Activated T-helper 2 cell treated with anti-CD3 and anti-CD28 coated beads, Interferon-gamma antibody, Interleukin-2, Interleukin-4, amounts not matched to agents 10 μg/mL and 5 μg/mL and 100 μg/mL, durations not matched to agents 14 hours and 24 hours and 36 hours (primary cell): ENCODE measurements at regions of chr5 and their contacts with region 1.

Region 1: DNA sequence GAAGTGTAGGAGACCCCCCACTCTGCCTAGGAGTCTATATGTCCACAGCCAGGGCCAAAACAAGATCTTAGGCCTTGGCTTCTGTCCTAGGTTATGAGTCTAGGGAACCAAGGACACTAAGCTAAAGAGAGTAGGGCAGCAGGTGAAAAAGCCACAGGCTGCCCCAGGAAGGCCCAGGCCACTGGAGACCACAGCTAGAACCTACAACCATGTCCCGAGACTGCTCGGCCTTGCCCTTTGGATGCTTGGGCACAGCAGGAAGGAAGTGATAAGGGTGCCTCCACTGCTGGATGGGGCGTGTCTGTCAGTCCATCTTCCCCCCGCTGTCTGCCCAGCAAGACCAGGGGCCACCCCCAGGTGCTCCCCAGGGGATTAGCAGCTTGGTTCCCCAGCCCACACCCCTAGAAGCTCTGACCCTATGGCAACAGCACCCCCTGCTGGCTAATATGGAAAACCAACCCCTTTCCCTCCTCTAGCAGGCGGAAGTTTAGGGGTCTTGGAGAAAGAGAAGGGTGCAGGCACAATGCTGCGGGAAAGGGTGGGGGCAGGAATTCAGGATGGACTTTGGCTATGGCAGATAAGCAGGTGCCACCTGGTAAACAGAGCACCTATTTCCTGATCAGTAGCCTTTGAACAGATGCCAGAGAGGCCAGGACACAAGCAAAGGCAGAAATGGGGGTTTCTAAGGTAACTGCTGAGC is 10.5 kb upstream of the IRF1 start:
- DNase-seq: peak; percentile 69
- H3K4me3 Mint-ChIP-seq: no peak overlapping the region
- H3K27ac Mint-ChIP-seq: peak overlapping the region; percentile 58
- H3K4me1 Mint-ChIP-seq: peaks cover 22% of the 10 kb centered on the region
- H3K27me3 Mint-ChIP-seq: peaks cover under 1% of the 10 kb centered on the region

Region 2: DNA sequence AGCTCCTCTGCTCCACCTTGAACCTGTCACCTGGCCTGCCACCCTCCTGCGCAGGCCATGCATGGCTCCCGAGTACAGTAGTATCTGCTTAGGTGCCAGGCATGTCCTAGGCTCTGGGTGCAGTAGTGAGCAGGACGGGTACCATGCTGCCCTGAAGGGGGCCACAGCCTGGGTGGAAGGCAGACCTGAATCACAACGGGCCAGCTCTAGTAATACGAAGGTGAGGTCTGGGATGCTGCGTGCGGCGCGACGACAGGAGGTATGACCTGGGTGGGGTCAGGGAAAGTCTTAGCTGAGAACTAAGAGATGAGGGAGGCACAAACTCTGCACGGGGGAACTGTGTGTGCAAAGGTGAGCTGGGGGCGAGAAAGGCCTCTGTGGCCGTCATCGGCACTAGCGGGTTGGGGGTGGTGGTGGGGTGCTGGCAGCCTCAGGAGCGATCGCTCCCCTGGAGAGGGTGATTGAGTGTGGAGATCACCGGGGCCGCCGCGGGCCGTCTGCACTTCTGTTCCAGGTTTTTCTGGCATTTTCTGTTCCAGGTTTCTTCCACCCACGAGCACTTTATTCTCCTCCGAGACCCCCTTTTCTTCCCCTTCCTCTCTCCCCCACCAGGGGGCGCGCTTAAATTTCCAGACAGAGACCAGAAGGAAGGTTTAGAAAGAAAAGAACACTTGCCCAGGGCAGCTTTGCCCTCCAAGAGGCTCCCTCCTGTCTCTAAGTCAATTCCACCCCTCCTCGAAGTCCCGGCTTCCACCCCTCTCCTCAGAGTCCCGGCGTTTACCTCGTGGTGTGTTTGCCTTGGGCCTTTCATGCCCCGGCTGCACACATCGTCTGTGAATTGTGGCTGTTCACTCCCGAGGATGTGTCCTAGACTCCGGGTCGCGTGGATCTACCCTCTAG is 228.5 kb before region 1 on chr5:
- intact Hi-C with region 1: loop called (anchors 1 kb)
- DNase-seq: peak; percentile 52
- H3K4me3 Mint-ChIP-seq: no peak overlapping the region
- H3K27ac Mint-ChIP-seq: peak overlapping the region; percentile 6
- H3K4me1 Mint-ChIP-seq: peaks cover 3% of the 10 kb centered on the region
- H3K27me3 Mint-ChIP-seq: peaks cover 5% of the 10 kb centered on the region

Region 3: DNA sequence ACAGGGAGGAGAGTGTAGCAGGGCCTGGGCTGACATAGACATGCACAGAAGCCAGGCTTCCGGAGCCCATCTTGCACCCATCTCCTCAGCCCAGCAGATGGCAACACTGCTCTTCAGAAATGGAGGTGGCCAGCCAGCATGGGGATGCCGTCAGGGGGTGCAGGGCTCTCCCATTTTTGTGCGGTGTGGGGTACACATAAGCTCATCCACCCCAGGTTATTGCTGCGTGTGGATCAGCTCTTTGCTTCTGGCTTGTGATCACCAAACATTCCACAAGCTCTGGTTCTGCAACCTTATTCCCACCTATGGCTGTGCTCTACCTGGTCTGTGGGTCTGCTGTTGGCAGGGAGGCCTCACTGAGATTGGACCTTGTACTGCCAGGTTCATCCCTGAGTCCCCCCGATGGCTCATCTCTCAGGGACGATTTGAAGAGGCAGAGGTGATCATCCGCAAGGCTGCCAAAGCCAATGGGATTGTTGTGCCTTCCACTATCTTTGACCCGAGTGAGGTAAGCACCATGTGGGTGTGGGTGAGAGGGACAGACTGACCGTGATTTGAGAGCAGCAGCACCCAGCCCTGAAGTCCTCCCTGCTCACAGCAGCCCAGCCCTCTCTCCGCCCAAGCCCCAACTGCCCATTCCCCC is 114.3 kb before region 1 on chr5:
- intact Hi-C with region 1: loop called (anchors 1 kb)
- DNase-seq: peak; percentile 73
- H3K4me3 Mint-ChIP-seq: no peak overlapping the region
- H3K27ac Mint-ChIP-seq: peak overlapping the region; percentile 24
- H3K4me1 Mint-ChIP-seq: peaks cover 42% of the 10 kb centered on the region
- H3K27me3 Mint-ChIP-seq: no peaks in the 10 kb centered on the region

Region 4: GRCh38 chr5:132419502-132420468 is 81.3 kb before region 1 on chr5:
- intact Hi-C with region 1: loop called (anchors 1 kb)
- DNase-seq: peak; percentile 64
- H3K4me3 Mint-ChIP-seq: peak overlapping the region; percentile 72
- H3K27ac Mint-ChIP-seq: peak overlapping the region; percentile 89
- H3K4me1 Mint-ChIP-seq: peaks cover 85% of the 10 kb centered on the region
- H3K27me3 Mint-ChIP-seq: no peaks in the 10 kb centered on the region